CD4-positive, alpha-beta memory T cell (primary cell): ENCODE measurements at regions of chr3 and their contacts with region 1.

Region 1: DNA sequence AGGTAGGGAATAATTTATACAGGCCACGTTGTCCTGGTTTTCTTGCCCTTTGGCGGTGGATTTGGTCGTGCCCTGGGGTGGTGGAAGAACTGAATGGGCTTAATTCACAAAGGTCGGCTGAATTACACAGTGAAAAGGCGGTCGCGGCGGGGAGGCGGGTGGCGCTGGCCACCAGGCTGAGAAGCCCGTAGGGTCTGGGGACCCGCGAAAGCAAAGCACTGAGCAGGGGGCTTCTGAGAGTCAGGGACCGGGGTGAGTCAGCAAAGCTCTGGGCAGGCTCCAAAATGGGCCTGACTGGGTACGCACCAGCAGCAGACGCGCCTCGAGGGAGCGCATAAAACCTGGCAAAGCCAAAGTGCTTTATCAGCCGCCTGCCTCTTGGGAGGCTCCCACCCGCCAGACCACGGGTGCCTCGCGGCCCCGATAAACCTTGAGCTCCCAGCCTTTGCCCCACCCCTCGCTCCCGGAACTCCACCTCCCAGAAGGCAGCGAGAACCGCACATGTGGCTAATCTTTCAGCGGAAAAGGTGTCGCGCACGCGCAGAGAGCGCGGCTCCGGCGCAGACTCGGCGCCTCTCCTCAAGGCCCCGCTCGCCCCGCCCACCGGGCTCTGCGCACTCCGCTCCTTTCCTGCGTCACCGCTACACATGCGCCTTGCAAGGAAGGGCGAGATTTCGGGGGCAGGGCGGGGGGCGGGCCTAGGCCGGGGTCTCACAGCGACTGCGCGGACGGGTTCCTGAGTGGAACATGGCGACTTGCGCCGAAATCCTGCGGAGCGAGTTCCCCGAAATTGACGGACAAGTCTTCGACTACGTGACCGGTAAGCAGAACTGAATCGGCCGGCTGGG is at the start of gene ABCF3:
- DNase-seq: peak; percentile 98 to 100 (median 99)
- H3K4me3 ChIP-seq: peak within 1 kb of the TSS; percentile 87 to 98
- H3K4me3 Mint-ChIP-seq: peak within 1 kb of the TSS; percentile 98 to 99 (median 98)
- H3K27ac ChIP-seq: peak within 1 kb of the TSS; percentile 80
- H3K27ac Mint-ChIP-seq: peak within 1 kb of the TSS; percentile 92 to 99 (median 97)
- H3K4me1 ChIP-seq: peaks cover 30% of the 10 kb centered on the region
- H3K4me1 Mint-ChIP-seq: peaks cover 26 to 47% (median 36%) of the 10 kb centered on the region in 4 donors
- H3K27me3 ChIP-seq: no peaks in the 10 kb centered on the region
- H3K27me3 Mint-ChIP-seq: no peaks in the 10 kb centered on the region
- total RNA-seq, gene ABCF3: 122 to 124 TPM

Region 2: GRCh38 chr3:184017672-184018423 is 167.8 kb before region 1 on chr3 and contains the start of gene ABCC5:
- CTCF ChIA-PET with region 1: interaction called, 4 read pairs
- POLR2A ChIA-PET with region 1: no interaction called
- intact Hi-C with region 1: loop called (anchors 5 kb)
- DNase-seq: peak; percentile 79 to 84 (median 82)
- H3K4me3 ChIP-seq: peak within 1 kb of the TSS; percentile 93 to 96
- H3K4me3 Mint-ChIP-seq: peak within 1 kb of the TSS; percentile 98 to 100 (median 100)
- H3K27ac ChIP-seq: peak within 1 kb of the TSS; percentile 43
- H3K27ac Mint-ChIP-seq: peak within 1 kb of the TSS; percentile 90 to 96 (median 93)
- H3K4me1 ChIP-seq: peaks cover 17% of the 10 kb centered on the region
- H3K4me1 Mint-ChIP-seq: peaks cover 16 to 35% (median 24%) of the 10 kb centered on the region in 4 donors
- H3K27me3 ChIP-seq: no peaks in the 10 kb centered on the region
- H3K27me3 Mint-ChIP-seq: peaks cover 6 to 8% of the 10 kb centered on the region in 2 donors
- total RNA-seq, gene ABCC5: 42.3 to 42.6 TPM